Activated CD4-positive, alpha-beta T cell treated with anti-CD3 and anti-CD28 coated beads, Interleukin-2, amount 10 ng/mL, durations not matched to agents 24 days and 14 days (primary cell): ENCODE measurements at regions of chr10 and their contacts with region 1.

Region 1: DNA sequence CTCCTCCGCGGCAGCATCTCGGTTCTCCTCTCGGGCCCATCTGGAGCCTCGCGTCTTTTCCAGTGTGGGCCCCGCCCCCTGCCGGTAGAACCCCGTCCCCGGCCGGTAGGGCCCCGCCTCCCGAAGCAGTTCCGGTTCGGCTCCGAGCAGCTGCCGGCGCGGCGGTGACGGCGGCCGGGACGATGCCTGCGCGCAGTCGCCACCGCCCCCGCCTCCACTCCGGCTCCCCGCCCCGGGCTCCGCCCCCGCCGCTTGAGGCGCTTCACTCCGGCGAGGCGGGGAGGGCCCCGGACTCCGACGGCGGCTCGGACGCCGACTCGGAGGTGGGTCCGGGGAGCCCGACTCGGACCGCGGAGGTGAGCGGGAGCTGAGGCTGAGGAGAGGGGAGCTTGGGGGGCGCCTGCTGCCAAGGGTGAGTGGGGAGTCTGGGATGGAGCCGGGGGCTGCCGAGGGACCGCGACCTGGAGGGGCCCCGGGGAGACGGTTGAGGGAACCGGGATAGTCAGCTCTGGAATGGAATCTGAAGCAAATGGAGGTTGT is at the start of gene SAMD8:
- DNase-seq: peak; percentile 99
- H3K4me3 Mint-ChIP-seq: peak within 1 kb of the TSS; percentile 91
- H3K27ac Mint-ChIP-seq: peak within 1 kb of the TSS; percentile 98
- H3K4me1 Mint-ChIP-seq: peaks cover 33% of the 10 kb centered on the region
- H3K27me3 Mint-ChIP-seq: no peaks in the 10 kb centered on the region
- total RNA-seq, gene SAMD8: 17.7 and 17.9 TPM in 2 replicates

Region 2: DNA sequence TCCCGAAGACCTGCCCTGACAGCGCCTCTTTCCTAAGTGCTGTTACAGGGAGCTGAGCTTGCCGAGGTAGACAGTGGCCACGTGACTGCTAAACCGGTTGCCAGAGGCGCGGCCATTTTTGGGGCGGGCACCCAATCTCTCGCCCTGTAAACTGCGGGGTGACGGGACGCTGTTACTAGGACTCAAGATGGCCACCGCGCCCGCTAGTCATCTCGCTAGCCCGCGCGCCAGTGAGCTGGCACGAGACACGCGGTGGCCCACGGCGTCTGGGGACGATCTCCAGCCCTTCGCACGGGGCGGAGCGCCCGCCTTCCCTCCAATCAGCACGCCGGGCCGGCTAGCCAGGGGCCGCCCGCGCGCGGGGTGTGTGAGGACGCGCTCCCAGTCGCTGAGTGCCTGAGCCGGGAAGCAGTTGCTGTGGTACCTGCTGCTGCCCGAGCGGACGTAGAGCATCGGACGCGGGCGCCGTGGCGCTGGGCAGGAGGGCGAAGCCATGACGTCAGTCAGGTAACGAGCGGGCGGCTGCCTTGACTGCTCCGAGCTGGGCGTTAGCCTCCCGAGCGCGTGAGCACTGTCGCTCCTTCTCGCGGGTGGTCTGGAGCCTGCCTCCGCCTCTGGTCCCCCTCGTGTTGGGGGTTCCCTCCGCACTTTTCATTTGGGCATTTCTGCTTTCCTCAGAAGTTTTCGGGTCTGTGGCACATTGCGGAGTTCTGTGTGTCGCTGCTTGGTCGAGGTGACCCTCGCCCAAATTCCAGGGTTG is 934.9 kb before region 1 on chr10:
- intact Hi-C with region 1: loop called (anchors 10 kb)
- DNase-seq: peak; percentile 98
- H3K4me3 Mint-ChIP-seq: peak overlapping the region; percentile 95
- H3K27ac Mint-ChIP-seq: peak overlapping the region; percentile 95
- H3K4me1 Mint-ChIP-seq: peaks cover 31% of the 10 kb centered on the region
- H3K27me3 Mint-ChIP-seq: no peaks in the 10 kb centered on the region

Region 3: DNA sequence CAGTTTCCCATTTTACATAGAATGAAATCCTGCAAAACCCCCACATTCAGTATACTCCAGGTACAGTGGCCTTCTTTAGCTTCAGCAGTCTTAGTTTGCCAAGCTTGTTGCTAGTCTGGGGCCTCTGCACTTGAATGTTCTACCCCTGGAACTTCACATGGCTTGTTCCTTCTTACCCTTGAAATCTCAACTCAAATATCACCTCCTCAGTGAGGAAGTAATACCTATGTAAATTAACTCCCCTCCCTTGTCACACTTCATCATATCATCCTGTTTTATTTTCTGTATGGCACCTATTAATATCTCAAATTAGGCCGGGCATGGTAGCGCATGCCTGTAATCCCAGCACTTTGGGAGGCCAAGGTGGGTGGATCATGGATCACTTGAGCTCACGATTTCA is 448.8 kb before region 1 on chr10:
- intact Hi-C with region 1: no loop called
- DNase-seq: no peak
- H3K4me3 Mint-ChIP-seq: no peak overlapping the region
- H3K27ac Mint-ChIP-seq: no peak overlapping the region
- H3K4me1 Mint-ChIP-seq: no peaks in the 10 kb centered on the region
- H3K27me3 Mint-ChIP-seq: no peaks in the 10 kb centered on the region

Region 4: DNA sequence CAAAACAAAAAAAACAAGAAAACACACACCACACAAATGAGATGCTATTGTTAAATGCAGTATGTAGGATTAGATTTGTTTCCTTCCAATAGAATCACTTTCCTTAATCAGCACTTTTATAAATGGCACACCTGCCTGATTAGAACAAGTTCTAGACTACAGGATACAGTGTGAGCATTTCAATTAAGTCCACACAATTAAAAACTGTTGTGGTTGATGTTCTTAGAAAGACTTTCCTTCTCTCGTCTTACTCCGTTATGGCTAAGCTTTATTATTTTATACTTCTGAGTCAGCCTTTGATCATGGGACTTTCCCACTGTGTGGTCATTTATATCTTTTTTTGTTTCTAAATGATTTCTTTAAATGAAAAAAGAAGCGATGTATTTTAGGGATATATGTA is 162.0 kb before region 1 on chr10:
- intact Hi-C with region 1: no loop called
- DNase-seq: no peak
- H3K4me3 Mint-ChIP-seq: no peak overlapping the region
- H3K27ac Mint-ChIP-seq: no peak overlapping the region
- H3K4me1 Mint-ChIP-seq: peaks cover 6% of the 10 kb centered on the region
- H3K27me3 Mint-ChIP-seq: no peaks in the 10 kb centered on the region

Region 5: GRCh38 chr10:75042292-75042974 is 69.0 kb before region 1 on chr10:
- intact Hi-C with region 1: loop called (anchors 5 kb)
- DNase-seq: peak; percentile 66
- H3K4me3 Mint-ChIP-seq: peak overlapping the region; percentile 32
- H3K27ac Mint-ChIP-seq: peak overlapping the region; percentile 86
- H3K4me1 Mint-ChIP-seq: peaks cover 33% of the 10 kb centered on the region
- H3K27me3 Mint-ChIP-seq: no peaks in the 10 kb centered on the region

Region 6: GRCh38 chr10:75099952-75100763 is 11.3 kb before region 1 on chr10:
- intact Hi-C with region 1: no loop called
- DNase-seq: peak; percentile 94
- H3K4me3 Mint-ChIP-seq: no peak overlapping the region
- H3K27ac Mint-ChIP-seq: peak overlapping the region; percentile 59
- H3K4me1 Mint-ChIP-seq: peaks cover 6% of the 10 kb centered on the region
- H3K27me3 Mint-ChIP-seq: no peaks in the 10 kb centered on the region

Region 7: GRCh38 chr10:75127471-75127870 is 16.0 kb after region 1 on chr10:
- intact Hi-C with region 1: no loop called
- DNase-seq: no peak
- H3K4me3 Mint-ChIP-seq: no peak overlapping the region
- H3K27ac Mint-ChIP-seq: no peak overlapping the region
- H3K4me1 Mint-ChIP-seq: peaks cover 11% of the 10 kb centered on the region
- H3K27me3 Mint-ChIP-seq: no peaks in the 10 kb centered on the region

Region 8: GRCh38 chr10:75137533-75138438 is 26.3 kb after region 1 on chr10:
- intact Hi-C with region 1: loop called (anchors 2 kb)
- DNase-seq: no peak
- H3K4me3 Mint-ChIP-seq: no peak overlapping the region
- H3K27ac Mint-ChIP-seq: peak overlapping the region; percentile 58
- H3K4me1 Mint-ChIP-seq: peaks cover 29% of the 10 kb centered on the region
- H3K27me3 Mint-ChIP-seq: no peaks in the 10 kb centered on the region

Region 9: GRCh38 chr10:75187961-75188426 is 76.6 kb after region 1 on chr10:
- intact Hi-C with region 1: loop called (anchors 5 kb)
- DNase-seq: peak; percentile 89
- H3K4me3 Mint-ChIP-seq: no peak overlapping the region
- H3K27ac Mint-ChIP-seq: peak overlapping the region; percentile 15
- H3K4me1 Mint-ChIP-seq: peaks cover 12% of the 10 kb centered on the region
- H3K27me3 Mint-ChIP-seq: no peaks in the 10 kb centered on the region

Region 10: DNA sequence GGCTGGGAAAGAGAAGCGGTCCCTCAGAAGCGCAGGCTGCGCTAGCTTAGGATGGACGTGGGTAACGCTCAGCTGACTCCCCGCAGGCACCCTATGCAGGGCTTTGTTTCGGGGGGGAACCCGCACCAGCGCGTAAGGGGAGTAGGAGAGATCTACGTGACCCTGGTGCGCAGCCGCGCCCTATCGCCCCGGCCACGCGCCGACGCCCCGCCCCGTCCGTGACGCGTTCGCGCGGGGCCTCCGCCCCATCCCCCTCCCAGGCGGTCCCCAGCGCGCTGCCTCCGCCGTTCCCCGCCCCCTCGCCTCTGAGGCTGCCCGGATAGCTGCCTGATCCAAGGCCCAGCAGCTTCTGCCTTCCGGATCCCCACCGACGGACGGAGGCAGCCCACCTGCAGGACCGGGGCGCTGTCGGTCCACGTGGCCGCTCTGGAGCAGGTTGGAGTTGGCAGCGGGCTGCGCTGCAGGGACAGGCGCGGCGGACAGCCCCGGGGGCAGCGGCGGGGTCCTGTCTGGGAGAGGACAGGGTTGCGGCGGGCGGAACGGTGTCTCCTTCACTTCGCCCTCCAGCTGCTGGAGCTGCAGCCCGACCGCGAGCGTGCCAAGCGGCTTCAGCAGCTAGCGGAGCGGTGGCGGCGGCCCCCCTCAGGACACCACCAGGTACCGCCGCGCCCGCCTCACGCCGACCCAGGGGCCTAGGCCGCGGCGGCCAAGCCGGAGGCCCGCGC is 99.0 kb after region 1 on chr10 and contains the start of gene VDAC2:
- intact Hi-C with region 1: loop called (anchors 1 kb)
- DNase-seq: peak; percentile 99
- H3K4me3 Mint-ChIP-seq: peak within 1 kb of the TSS; percentile 96
- H3K27ac Mint-ChIP-seq: peak within 1 kb of the TSS; percentile 100
- H3K4me1 Mint-ChIP-seq: peaks cover 34% of the 10 kb centered on the region
- H3K27me3 Mint-ChIP-seq: no peaks in the 10 kb centered on the region
- total RNA-seq, gene VDAC2: 245 and 249 TPM in 2 replicates

Region 11: GRCh38 chr10:75235375-75236177 is 124.1 kb after region 1 on chr10 and contains the start of gene COMTD1:
- intact Hi-C with region 1: loop called (anchors 1 kb)
- DNase-seq: peak; percentile 98
- H3K4me3 Mint-ChIP-seq: peak within 1 kb of the TSS; percentile 87
- H3K27ac Mint-ChIP-seq: peak within 1 kb of the TSS; percentile 91
- H3K4me1 Mint-ChIP-seq: peaks cover 14% of the 10 kb centered on the region
- H3K27me3 Mint-ChIP-seq: no peaks in the 10 kb centered on the region
- total RNA-seq, gene COMTD1: 37.1 and 38.1 TPM in 2 replicates